CD4-positive, alpha-beta memory T cell (primary cell): ENCODE measurements at regions of chr1 and their contacts with region 1.

Region 1: DNA sequence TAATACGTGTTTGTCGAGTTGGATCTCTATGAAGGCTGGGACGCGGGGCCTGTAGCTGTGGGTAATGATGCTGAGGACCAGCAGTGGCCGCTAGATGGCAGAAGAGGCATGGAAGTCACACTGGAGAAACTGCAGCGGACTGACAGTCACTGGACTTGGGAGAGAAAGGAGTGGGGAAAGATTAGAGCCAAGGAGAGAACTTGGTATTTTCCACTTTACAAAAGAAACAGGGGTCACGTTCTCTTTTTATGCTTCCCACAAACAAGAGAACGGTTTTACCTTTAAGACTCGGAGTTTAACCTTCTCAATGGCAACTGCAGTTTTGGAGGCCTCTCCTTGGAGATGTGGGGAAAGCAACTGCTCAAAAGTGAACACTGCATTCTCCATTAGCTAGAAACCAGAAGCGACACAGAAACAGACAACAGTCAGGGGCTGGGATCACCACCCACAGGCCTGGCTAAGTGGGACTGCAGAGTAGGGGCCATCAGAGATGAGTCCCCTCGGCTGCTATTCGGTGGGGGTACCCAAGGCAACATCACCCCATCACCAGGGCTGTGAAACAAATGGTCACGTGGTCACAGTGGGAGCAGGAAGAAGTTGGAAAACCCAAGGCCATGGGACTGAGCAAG is 51.1 kb upstream of the EDEM3 start:
- DNase-seq: peak; percentile 76 to 80 (median 78)
- H3K4me3 ChIP-seq: no peak overlapping the region
- H3K4me3 Mint-ChIP-seq: no peak overlapping the region
- H3K27ac ChIP-seq: no peak overlapping the region
- H3K27ac Mint-ChIP-seq: peak overlapping the region; percentile 53 to 94 (median 86)
- H3K4me1 ChIP-seq: no peaks in the 10 kb centered on the region
- H3K4me1 Mint-ChIP-seq: peaks cover 4 to 7% (median 5%) of the 10 kb centered on the region in 4 donors
- H3K27me3 ChIP-seq: no peaks in the 10 kb centered on the region
- H3K27me3 Mint-ChIP-seq: no peaks in the 10 kb centered on the region

Region 2: GRCh38 chr1:183915625-183916510 is 889.9 kb before region 1 on chr1:
- CTCF ChIA-PET with region 1: no interaction called
- POLR2A ChIA-PET with region 1: no interaction called
- intact Hi-C with region 1: no loop called
- DNase-seq: peak; percentile 78 to 88 (median 81)
- H3K4me3 ChIP-seq: no peak overlapping the region
- H3K4me3 Mint-ChIP-seq: peak overlapping the region in 2 of 8 donors; percentile 48 to 68
- H3K27ac ChIP-seq: no peak overlapping the region
- H3K27ac Mint-ChIP-seq: peak overlapping the region in 6 of 7 donors; percentile 41 to 84 (median 54)
- H3K4me1 ChIP-seq: peaks cover 5% of the 10 kb centered on the region
- H3K4me1 Mint-ChIP-seq: peaks cover 8 to 12% (median 10%) of the 10 kb centered on the region in 4 donors
- H3K27me3 ChIP-seq: no peaks in the 10 kb centered on the region
- H3K27me3 Mint-ChIP-seq: no peaks in the 10 kb centered on the region

Region 3: GRCh38 chr1:184419728-184420161 is 386.0 kb before region 1 on chr1:
- CTCF ChIA-PET with region 1: no interaction called
- POLR2A ChIA-PET with region 1: no interaction called
- intact Hi-C with region 1: no loop called
- DNase-seq: no peak
- H3K4me3 ChIP-seq: no peak overlapping the region
- H3K4me3 Mint-ChIP-seq: no peak overlapping the region
- H3K27ac ChIP-seq: no peak overlapping the region
- H3K27ac Mint-ChIP-seq: no peak overlapping the region
- H3K4me1 ChIP-seq: no peaks in the 10 kb centered on the region
- H3K4me1 Mint-ChIP-seq: peaks cover 0 to 1% (median 0%) of the 10 kb centered on the region in 4 donors
- H3K27me3 ChIP-seq: no peaks in the 10 kb centered on the region
- H3K27me3 Mint-ChIP-seq: peaks cover 5 to 22% of the 10 kb centered on the region in 2 donors

Region 4: DNA sequence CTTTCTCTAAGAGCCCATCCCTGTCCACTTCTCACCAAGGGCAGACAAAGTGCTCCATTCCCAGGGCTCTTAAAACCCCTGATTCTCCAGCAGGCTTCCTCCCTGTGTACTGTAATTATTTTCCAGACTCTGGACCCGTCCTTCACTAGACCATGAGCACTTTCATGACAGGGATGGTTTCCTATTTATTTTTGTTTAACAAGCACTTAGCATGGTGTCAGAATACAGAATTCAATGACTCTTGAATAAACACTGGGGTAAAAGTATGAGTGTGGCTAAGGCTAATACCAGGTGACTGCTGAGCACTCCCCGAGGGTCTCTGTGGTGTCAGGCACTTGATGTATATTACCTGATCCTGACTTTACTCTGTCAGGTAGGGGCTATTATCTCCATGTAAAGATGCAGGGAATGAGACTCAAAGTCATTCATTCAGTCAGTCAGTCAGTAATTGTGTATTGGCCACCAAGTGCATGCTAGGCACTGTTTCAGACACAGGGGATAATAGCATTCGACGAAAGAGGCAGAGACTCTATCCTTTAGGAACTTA is 371.8 kb before region 1 on chr1:
- CTCF ChIA-PET with region 1: no interaction called
- POLR2A ChIA-PET with region 1: no interaction called
- intact Hi-C with region 1: no loop called
- DNase-seq: no peak
- H3K4me3 ChIP-seq: no peak overlapping the region
- H3K4me3 Mint-ChIP-seq: no peak overlapping the region
- H3K27ac ChIP-seq: no peak overlapping the region
- H3K27ac Mint-ChIP-seq: no peak overlapping the region
- H3K4me1 ChIP-seq: no peaks in the 10 kb centered on the region
- H3K4me1 Mint-ChIP-seq: no peaks in the 10 kb centered on the region
- H3K27me3 ChIP-seq: no peaks in the 10 kb centered on the region
- H3K27me3 Mint-ChIP-seq: peaks cover 5 to 10% of the 10 kb centered on the region in 2 donors

Region 5: DNA sequence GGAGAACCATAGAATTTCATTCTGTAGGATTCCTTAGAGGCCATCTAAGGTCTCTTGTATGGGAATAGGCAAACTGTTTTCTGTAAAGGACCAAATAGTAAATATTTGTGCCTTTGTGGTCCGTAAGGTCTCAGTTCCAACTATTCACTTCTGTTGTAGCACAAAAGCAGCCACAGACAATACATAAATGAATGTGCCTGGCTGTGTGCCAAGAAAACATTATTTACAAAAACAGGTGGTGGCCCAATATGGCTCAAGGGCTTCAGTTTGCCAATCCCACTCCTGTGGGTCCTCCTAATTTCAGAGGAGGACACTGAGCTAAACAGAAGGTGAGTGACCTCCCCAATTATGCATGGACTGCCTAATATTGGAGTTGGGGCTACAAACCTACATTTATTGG is 16.5 kb after region 1 on chr1:
- CTCF ChIA-PET with region 1: interaction called, 26 read pairs
- POLR2A ChIA-PET with region 1: no interaction called
- intact Hi-C with region 1: no loop called
- DNase-seq: no peak
- H3K4me3 ChIP-seq: no peak overlapping the region
- H3K4me3 Mint-ChIP-seq: no peak overlapping the region
- H3K27ac ChIP-seq: no peak overlapping the region
- H3K27ac Mint-ChIP-seq: peak overlapping the region in 2 of 7 donors; percentile 7 to 9
- H3K4me1 ChIP-seq: no peaks in the 10 kb centered on the region
- H3K4me1 Mint-ChIP-seq: peaks cover 0 to 8% (median 1%) of the 10 kb centered on the region in 4 donors
- H3K27me3 ChIP-seq: no peaks in the 10 kb centered on the region
- H3K27me3 Mint-ChIP-seq: no peaks in the 10 kb centered on the region

Region 6: GRCh38 chr1:184892116-184892515 is 86.3 kb after region 1 on chr1:
- CTCF ChIA-PET with region 1: interaction called, 23 read pairs
- POLR2A ChIA-PET with region 1: no interaction called
- intact Hi-C with region 1: loop called (anchors 5 kb)
- DNase-seq: peak; percentile 19 to 39 (median 29)
- H3K4me3 ChIP-seq: no peak overlapping the region
- H3K4me3 Mint-ChIP-seq: peak overlapping the region in 7 of 8 donors; percentile 49 to 71 (median 59)
- H3K27ac ChIP-seq: peak overlapping the region; percentile 52
- H3K27ac Mint-ChIP-seq: peak overlapping the region; percentile 74 to 95 (median 90)
- H3K4me1 ChIP-seq: peaks cover 64% of the 10 kb centered on the region
- H3K4me1 Mint-ChIP-seq: peaks cover 42 to 74% (median 58%) of the 10 kb centered on the region in 4 donors
- H3K27me3 ChIP-seq: no peaks in the 10 kb centered on the region
- H3K27me3 Mint-ChIP-seq: no peaks in the 10 kb centered on the region

Region 7: DNA sequence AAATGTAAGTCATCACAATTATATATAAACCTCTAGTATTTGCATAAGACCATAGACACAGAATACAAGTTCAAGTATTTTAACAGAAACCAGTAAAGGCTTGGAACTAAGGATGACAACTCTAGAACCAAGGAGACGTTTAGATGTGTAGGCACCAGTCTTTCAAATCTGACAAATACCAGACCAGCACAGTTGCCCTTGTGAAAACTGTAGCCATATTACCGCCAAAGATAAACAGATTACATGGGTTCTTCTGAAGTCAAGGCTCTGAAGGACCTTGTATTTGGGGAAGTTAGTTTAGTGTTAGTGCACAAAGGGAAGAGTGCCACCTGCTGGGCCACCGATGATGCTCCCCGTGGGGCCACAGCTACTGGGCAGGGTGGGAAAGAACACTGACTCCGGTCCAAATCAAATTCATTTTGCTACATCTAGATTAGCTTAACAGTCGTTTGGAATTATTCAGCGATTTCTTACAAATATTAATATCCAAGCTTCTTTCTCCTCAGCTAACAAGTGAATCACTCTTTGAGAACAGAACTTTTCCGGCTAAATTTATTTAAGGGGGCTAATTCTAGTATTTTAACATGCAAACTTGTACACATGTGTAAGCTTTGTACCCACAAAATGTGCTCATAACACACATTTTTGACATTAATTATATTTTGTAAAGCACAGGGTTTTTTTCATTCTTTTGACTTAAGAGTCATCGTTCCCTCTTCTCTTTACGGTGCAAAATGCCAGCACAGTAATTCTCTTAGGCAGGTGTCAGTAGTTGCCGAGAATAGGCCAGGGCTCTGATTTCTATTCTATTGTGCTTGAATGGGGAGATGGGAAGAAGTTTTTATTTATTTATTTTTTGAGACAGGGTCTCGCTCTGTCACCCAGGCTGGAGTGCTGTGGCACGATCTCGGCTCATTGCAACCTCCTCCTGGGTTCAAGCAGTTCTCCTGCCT is 176.5 kb after region 1 on chr1:
- CTCF ChIA-PET with region 1: interaction called, 506 read pairs
- POLR2A ChIA-PET with region 1: interaction called, 12 read pairs
- intact Hi-C with region 1: loop called (anchors 1 kb)
- DNase-seq: peak; percentile 70 to 79 (median 74)
- H3K4me3 ChIP-seq: no peak overlapping the region
- H3K4me3 Mint-ChIP-seq: no peak overlapping the region
- H3K27ac ChIP-seq: no peak overlapping the region
- H3K27ac Mint-ChIP-seq: peak overlapping the region in 1 of 7 donors; percentile 56
- H3K4me1 ChIP-seq: peaks cover 4% of the 10 kb centered on the region
- H3K4me1 Mint-ChIP-seq: peaks cover 5 to 8% (median 5%) of the 10 kb centered on the region in 4 donors
- H3K27me3 ChIP-seq: no peaks in the 10 kb centered on the region
- H3K27me3 Mint-ChIP-seq: peaks cover 0 to 7% of the 10 kb centered on the region in 2 donors

Region 8: GRCh38 chr1:185170291-185170848 is 364.6 kb after region 1 on chr1:
- CTCF ChIA-PET with region 1: interaction called, 25 read pairs
- POLR2A ChIA-PET with region 1: no interaction called
- intact Hi-C with region 1: loop called (anchors 1 kb)
- DNase-seq: peak; percentile 41 to 51 (median 44)
- H3K4me3 ChIP-seq: no peak overlapping the region
- H3K4me3 Mint-ChIP-seq: peak overlapping the region in 1 of 8 donors; percentile 57
- H3K27ac ChIP-seq: no peak overlapping the region
- H3K27ac Mint-ChIP-seq: peak overlapping the region in 4 of 7 donors; percentile 37 to 55 (median 40)
- H3K4me1 ChIP-seq: no peaks in the 10 kb centered on the region
- H3K4me1 Mint-ChIP-seq: peaks cover 0 to 4% (median 2%) of the 10 kb centered on the region in 4 donors
- H3K27me3 ChIP-seq: no peaks in the 10 kb centered on the region
- H3K27me3 Mint-ChIP-seq: no peaks in the 10 kb centered on the region

Region 9: DNA sequence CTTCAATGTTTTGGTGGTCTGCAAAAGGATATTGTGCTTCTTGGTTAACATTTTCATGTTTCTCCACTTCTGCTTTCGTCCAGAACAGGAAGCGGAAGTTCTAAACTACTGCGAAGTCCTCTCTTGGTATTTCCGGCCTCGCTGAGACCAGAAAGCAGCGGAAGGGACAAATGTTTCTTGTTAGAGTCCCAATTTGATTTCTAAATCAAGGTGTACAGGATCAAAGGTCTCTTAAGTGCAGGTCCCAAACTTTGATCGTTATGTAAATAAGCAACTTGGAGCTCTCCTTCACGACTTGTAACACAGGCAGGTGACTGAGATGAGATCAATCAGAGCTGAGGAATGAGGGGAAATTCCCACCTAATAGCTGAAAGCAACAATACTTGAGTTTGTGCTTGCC is 888.3 kb after region 1 on chr1:
- CTCF ChIA-PET with region 1: interaction called, 15 read pairs
- POLR2A ChIA-PET with region 1: no interaction called
- intact Hi-C with region 1: loop called (anchors 1 kb)
- DNase-seq: peak in 3 of 5 donors; percentile 12 to 24 (median 17)
- H3K4me3 ChIP-seq: peak overlapping the region; percentile 4 to 53
- H3K4me3 Mint-ChIP-seq: peak overlapping the region; percentile 80 to 91 (median 86)
- H3K27ac ChIP-seq: peak overlapping the region; percentile 40
- H3K27ac Mint-ChIP-seq: peak overlapping the region; percentile 84 to 94 (median 92)
- H3K4me1 ChIP-seq: peaks cover 20% of the 10 kb centered on the region
- H3K4me1 Mint-ChIP-seq: peaks cover 13 to 19% (median 16%) of the 10 kb centered on the region in 4 donors
- H3K27me3 ChIP-seq: no peaks in the 10 kb centered on the region
- H3K27me3 Mint-ChIP-seq: peaks cover 6 to 8% of the 10 kb centered on the region in 2 donors